Activated naive CD8-positive, alpha-beta T cell treated with anti-CD3 and anti-CD28 coated beads, Interleukin-2, amount 10 ng/mL, durations not matched to agents 7 days and 5 days (primary cell): ENCODE measurements at regions of chr17 and their contacts with region 1.

Region 1: DNA sequence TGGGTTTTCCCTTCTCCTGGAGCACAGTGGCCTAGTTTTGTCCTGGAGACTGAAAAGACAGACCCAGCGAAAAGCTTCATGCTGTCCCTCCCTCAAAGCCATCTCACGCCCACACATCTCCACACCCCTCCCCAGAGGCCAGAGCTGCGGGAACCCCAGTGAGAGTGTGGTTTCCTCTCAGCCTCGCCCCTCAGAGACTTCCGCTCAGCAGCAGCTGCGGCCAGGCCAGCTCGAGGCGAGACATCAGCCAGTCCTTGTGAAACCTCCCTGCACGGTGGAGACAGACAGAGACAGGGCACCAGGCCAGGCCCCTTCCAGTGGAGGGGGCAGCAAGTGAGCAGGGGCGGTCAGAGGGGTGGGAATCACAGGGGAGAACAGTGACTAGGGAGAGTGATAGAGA is 77.0 kb upstream of the TNRC6C start:
- DNase-seq: peak; percentile 82
- ATAC-seq: peak; percentile 74
- H3K4me3 Mint-ChIP-seq: peak overlapping the region; percentile 87
- H3K27ac Mint-ChIP-seq: peak overlapping the region; percentile 99
- H3K4me1 Mint-ChIP-seq: peaks cover 38% of the 10 kb centered on the region
- H3K27me3 Mint-ChIP-seq: peaks cover 5% of the 10 kb centered on the region

Region 2: GRCh38 chr17:77842528-77843147 is 38.9 kb before region 1 on chr17:
- POLR2A ChIA-PET with region 1: interaction called, 21 read pairs
- DNase-seq: no peak
- ATAC-seq: no peak
- H3K4me3 Mint-ChIP-seq: peak overlapping the region; percentile 1
- H3K27ac Mint-ChIP-seq: peak overlapping the region; percentile 77
- H3K4me1 Mint-ChIP-seq: peaks cover 33% of the 10 kb centered on the region
- H3K27me3 Mint-ChIP-seq: no peaks in the 10 kb centered on the region

Region 3: DNA sequence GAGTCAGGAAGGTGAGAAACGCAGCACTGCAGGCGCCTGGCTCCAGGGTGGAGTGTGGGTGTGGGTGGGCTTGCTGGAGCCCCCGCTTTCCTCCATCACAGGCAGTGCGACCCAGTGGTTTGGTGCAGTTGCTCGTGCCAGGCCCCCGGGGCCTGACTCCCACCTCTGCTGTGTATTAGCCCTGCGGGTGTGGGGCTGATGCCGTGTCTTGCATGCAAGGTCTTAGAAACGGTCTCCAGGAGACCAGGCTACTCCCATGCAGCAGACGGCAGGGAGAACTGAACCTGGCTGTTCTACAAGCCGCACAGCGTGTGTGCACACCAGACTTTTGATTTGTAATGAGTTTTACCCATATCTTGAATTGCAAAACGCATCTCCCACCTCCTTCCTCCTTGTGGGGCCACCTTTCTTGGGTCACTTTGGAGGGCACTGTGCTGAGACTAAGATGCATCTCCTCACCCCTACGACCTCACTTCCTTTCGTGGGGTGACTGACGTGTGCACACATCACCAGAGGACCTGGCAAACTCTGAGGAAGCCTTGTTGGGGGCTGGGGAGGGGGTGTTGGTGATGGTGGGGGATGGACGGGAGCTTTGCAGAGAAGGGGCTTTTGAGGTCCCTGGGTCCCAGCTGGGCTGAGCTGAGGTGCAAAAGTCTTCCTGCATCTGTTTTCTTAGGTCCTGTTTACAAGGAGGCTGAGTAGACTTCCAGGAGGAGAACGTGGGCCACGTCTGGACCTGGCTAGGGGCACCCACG is 24.8 kb before region 1 on chr17:
- POLR2A ChIA-PET with region 1: no interaction called
- DNase-seq: no peak
- ATAC-seq: peak; percentile 65
- H3K4me3 Mint-ChIP-seq: no peak overlapping the region
- H3K27ac Mint-ChIP-seq: no peak overlapping the region
- H3K4me1 Mint-ChIP-seq: peaks cover 18% of the 10 kb centered on the region
- H3K27me3 Mint-ChIP-seq: peaks cover 6% of the 10 kb centered on the region

Region 4: DNA sequence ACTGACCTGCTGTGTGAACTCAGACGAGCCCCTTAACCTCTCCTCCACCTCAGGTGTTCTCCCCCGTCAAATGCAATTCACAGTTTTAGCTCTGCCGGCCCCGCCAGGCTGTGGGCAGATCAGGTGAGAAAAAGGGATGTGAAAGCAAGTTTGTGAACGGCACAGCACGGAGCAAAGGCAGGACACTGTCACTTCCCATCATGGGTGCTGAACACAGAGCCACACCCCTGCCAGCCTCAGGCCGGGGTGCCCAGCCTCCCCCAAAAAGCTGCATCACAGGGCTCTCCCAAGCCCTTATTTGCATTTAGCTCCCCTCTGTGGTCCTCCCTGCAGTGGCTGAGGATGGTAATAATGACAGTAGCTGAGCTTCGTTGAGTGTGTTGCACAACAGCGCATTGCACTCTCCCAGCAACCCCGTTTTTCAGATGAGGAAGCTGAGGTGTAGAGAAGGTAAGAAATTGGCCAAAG is 11.8 kb before region 1 on chr17:
- POLR2A ChIA-PET with region 1: interaction called, 13 read pairs
- DNase-seq: no peak
- ATAC-seq: peak; percentile 70
- H3K4me3 Mint-ChIP-seq: peak overlapping the region; percentile 41
- H3K27ac Mint-ChIP-seq: peak overlapping the region; percentile 50
- H3K4me1 Mint-ChIP-seq: peaks cover 27% of the 10 kb centered on the region
- H3K27me3 Mint-ChIP-seq: peaks cover 2% of the 10 kb centered on the region

Region 5: DNA sequence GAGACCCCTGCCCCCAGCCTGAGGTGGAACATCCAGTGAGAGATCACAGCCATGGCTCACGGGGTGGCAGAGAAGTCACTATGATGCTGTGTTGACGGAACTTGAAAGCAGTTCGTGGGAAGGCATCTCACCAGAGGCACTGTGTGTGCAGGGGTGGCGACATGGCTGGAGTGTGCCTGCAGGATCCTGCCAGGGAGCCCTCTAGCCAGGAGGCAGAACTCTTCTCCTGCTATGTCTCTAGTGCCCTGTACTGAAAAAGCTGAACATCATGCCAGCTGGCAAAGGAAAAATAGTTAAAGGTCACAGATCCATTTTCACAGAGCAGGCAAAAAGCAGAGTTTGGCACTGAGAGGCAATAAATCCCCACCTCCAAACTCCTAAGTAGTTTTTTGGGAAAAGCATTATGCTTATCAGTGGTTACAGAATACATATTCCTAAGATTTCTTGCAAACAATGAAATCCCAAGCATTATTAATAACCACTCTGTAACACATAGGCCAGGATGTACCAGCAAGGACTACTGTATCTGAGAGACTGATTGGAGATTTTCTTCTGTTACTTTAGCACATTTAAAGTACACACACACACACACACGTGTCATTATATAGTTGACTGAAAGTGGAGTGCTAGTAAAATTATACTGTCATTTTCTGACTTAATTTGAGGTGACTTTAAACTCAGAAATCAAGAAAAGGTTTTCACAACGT is 113.8 kb after region 1 on chr17:
- POLR2A ChIA-PET with region 1: no interaction called
- DNase-seq: no peak
- ATAC-seq: no peak
- H3K4me3 Mint-ChIP-seq: no peak overlapping the region
- H3K27ac Mint-ChIP-seq: no peak overlapping the region
- H3K4me1 Mint-ChIP-seq: peaks cover 18% of the 10 kb centered on the region
- H3K27me3 Mint-ChIP-seq: no peaks in the 10 kb centered on the region